Endothelial cell of umbilical vein (primary cell): ENCODE measurements at regions of chr2 and their contacts with region 1.

Region 1: DNA sequence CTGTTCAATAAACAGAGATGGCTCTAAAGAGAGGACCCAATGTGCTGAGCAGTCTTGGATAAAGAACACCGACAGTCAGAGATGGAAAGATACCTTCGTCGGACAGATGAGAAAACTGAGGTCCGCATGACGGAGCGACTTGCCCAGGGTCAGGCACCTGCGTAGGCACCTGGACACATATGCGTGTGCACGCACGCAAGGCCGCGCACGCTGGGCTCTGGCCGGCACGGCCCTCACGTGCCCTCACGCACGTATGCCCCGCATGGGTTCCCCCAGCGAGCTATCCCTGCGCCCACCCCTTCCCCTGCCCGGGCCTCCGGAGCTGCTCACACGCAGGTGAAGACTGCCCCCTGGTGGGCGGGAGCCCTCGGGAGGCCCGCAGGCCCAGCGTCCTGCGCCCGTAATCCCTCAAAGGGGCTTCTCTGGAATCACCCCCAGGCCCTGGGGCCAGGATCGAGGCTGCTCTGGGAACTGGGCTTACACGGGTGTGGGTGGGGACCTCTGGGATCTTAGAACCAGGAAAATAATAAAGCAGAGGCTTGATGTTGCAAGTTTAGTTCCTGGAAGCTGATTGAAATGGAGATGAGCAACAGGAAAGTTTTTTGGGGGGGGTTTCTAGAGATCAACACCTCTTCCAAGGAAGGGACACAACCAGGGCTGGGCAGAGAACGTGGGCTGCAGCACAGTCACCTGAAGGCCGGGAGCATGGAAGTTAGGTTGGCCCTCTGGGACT is 246.3 kb downstream of the TNS1 start:
- DNase-seq: peak; percentile 42
- H3K4me3 ChIP-seq: no peak overlapping the region
- H3K27ac ChIP-seq: no peak overlapping the region
- H3K4me1 ChIP-seq: no peaks in the 10 kb centered on the region
- H3K27me3 ChIP-seq: peaks cover 3 to 4% of the 10 kb centered on the region in 2 experiments
- CTCF ChIP-seq: peak; percentile 89 to 93
- POLR2A ChIP-seq: no peak

Region 2: GRCh38 chr2:216680951-216681629 is 1075.5 kb before region 1 on chr2:
- CTCF ChIA-PET with region 1: interaction called, 6 read pairs
- POLR2A ChIA-PET with region 1: no interaction called
- dilution Hi-C with region 1: no loop called
- intact Hi-C with region 1: loop called (anchors 1 kb)
- DNase-seq: no peak
- H3K4me3 ChIP-seq: no peak overlapping the region
- H3K27ac ChIP-seq: no peak overlapping the region
- H3K4me1 ChIP-seq: no peaks in the 10 kb centered on the region
- H3K27me3 ChIP-seq: peaks cover 0 to 13% of the 10 kb centered on the region in 2 experiments
- CTCF ChIP-seq: no peak
- POLR2A ChIP-seq: no peak